PC-9 (cell line): ENCODE measurements at regions of chr9 and their contacts with region 1.

Region 1: GRCh38 chr9:20112205-20112783 is 323.5 kb upstream of the SLC24A2 start:
- DNase-seq: no peak
- H3K4me3 ChIP-seq: no peak overlapping the region
- H3K27ac ChIP-seq: no peak overlapping the region
- H3K4me1 ChIP-seq: no peaks in the 10 kb centered on the region
- H3K27me3 ChIP-seq: no peaks in the 10 kb centered on the region
- CTCF ChIP-seq: no peak

Region 2: GRCh38 chr9:19527663-19528062 is 584.6 kb before region 1 on chr9:
- CTCF ChIA-PET with region 1: no interaction called
- POLR2A ChIA-PET with region 1: interaction called, 19 read pairs
- intact Hi-C with region 1: no loop called
- DNase-seq: no peak
- H3K4me3 ChIP-seq: no peak overlapping the region
- H3K27ac ChIP-seq: no peak overlapping the region
- H3K4me1 ChIP-seq: no peaks in the 10 kb centered on the region
- H3K27me3 ChIP-seq: no peaks in the 10 kb centered on the region
- CTCF ChIP-seq: no peak

Region 3: GRCh38 chr9:20084125-20084524 is 28.2 kb before region 1 on chr9:
- CTCF ChIA-PET with region 1: no interaction called
- POLR2A ChIA-PET with region 1: no interaction called
- intact Hi-C with region 1: no loop called
- DNase-seq: no peak
- H3K4me3 ChIP-seq: no peak overlapping the region
- H3K27ac ChIP-seq: no peak overlapping the region
- H3K4me1 ChIP-seq: no peaks in the 10 kb centered on the region
- H3K27me3 ChIP-seq: no peaks in the 10 kb centered on the region
- CTCF ChIP-seq: no peak